ENCODE measurements at regions of chr11 and their contacts with region 1.

Region 1: GRCh38 chr11:64000026-64000739 is 13.9 kb downstream of the OTUB1 start:
- DNase-seq: peak in 1 of 2 donors; percentile 79
- H3K4me3 ChIP-seq: peak overlapping the region; percentile 47 to 62
- H3K27ac ChIP-seq: no peak overlapping the region
- H3K4me1 ChIP-seq: peaks cover 11 to 18% of the 10 kb centered on the region in 2 donors
- H3K27me3 ChIP-seq: no peaks in the 10 kb centered on the region
- CTCF ChIP-seq: peak; percentile 54 to 95 (median 79)

Region 2: DNA sequence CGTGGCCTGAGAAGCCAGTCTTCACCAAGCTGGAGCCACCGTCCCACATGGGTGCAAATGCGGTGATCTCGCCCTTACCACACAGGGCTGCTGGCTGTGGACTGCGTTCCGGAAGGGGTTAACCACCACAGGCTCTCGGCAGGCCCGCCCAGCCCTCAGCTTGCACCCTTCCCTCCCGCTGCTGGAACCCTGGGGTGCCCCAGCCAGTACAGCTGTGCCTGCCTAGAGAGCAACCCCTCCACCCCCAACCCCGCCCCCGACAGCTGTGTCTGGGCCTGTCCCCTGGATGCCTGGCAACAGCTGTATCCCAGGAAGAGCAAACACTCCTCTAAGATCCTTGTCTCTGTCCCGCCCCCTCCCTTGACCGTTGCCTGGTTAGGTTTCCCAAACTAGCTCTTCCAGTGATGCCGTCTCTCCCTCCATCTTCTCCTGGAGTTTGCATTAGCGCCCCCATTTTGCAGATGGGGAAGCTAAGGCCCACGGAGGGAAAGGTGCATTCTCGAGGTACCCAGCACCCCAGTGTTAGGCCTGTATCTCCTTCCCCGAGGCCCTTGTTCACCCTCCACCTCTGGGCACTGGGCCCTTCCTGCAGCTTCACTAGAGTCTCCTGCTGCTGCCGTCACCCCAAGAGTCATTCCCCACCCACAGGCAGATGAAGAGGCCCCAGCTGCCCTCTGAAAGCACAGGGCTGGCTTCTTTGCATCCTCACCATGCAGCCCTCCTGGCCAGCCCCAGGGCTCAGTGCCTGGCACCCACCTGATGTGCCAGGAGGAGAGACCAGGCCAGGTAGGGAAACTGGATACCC is 38.4 kb before region 1 on chr11:
- intact Hi-C with region 1: no loop called
- DNase-seq: no peak
- H3K4me3 ChIP-seq: no peak overlapping the region
- H3K27ac ChIP-seq: no peak overlapping the region
- H3K4me1 ChIP-seq: no peaks in the 10 kb centered on the region
- H3K27me3 ChIP-seq: no peaks in the 10 kb centered on the region
- CTCF ChIP-seq: no peak

Region 3: GRCh38 chr11:64152841-64153691 is 152.9 kb after region 1 on chr11:
- intact Hi-C with region 1: loop called (anchors 1 kb)
- DNase-seq: peak in 1 of 2 donors; percentile 75
- H3K4me3 ChIP-seq: no peak overlapping the region
- H3K27ac ChIP-seq: no peak overlapping the region
- H3K4me1 ChIP-seq: peaks cover 0 to 3% of the 10 kb centered on the region in 2 donors
- H3K27me3 ChIP-seq: no peaks in the 10 kb centered on the region
- CTCF ChIP-seq: peak; percentile 87 to 100 (median 100)